Pancreas (tissue), 10 donors: ENCODE measurements at regions of chr7 and their contacts with region 1.

Region 1: GRCh38 chr7:140639366-140640053 is 1.1 kb downstream of the DENND2A start:
- DNase-seq: peak in 1 of 6 donors; percentile 28
- ATAC-seq: peak in 3 of 4 donors; percentile 13 to 41 (median 24)
- H3K4me3 ChIP-seq: peak overlapping the region in 3 of 4 donors; percentile 18 to 50 (median 35)
- H3K27ac ChIP-seq: peak overlapping the region in 1 of 4 donors; percentile 17
- H3K4me1 ChIP-seq: no peaks in the 10 kb centered on the region
- H3K27me3 ChIP-seq: no peaks in the 10 kb centered on the region
- CTCF ChIP-seq: no peak

Region 2: GRCh38 chr7:140326116-140326928 is 313.2 kb before region 1 on chr7:
- intact Hi-C with region 1: no loop called
- DNase-seq: peak in 5 of 6 donors; percentile 31 to 64 (median 59)
- ATAC-seq: peak; percentile 77 to 96 (median 94)
- H3K4me3 ChIP-seq: no peak overlapping the region
- H3K27ac ChIP-seq: no peak overlapping the region
- H3K4me1 ChIP-seq: no peaks in the 10 kb centered on the region
- H3K27me3 ChIP-seq: no peaks in the 10 kb centered on the region
- CTCF ChIP-seq: peak in 3 of 4 donors; percentile 43 to 46 (median 44)

Region 3: GRCh38 chr7:140525743-140526142 is 113.8 kb before region 1 on chr7:
- intact Hi-C with region 1: loop called in 1 of 3 experiments (anchors 10 kb)
- DNase-seq: no peak
- ATAC-seq: no peak
- H3K4me3 ChIP-seq: no peak overlapping the region
- H3K27ac ChIP-seq: no peak overlapping the region
- H3K4me1 ChIP-seq: no peaks in the 10 kb centered on the region
- H3K27me3 ChIP-seq: no peaks in the 10 kb centered on the region
- CTCF ChIP-seq: no peak